H1 (cell line): ENCODE measurements at regions of chr1 and their contacts with region 1.

Region 1: GRCh38 chr1:39973503-39974135 is 18.7 kb downstream of the MFSD2A start:
- DNase-seq: peak; percentile 38 to 85
- H3K4me3 ChIP-seq: no peak overlapping the region
- H3K27ac ChIP-seq: no peak overlapping the region
- H3K4me1 ChIP-seq: peaks cover 0 to 3% (median 0%) of the 10 kb centered on the region in 4 experiments; a peak in 2 of 7 replicates
- H3K27me3 ChIP-seq: no peaks in the 10 kb centered on the region
- CTCF ChIP-seq: peak; percentile 89 to 98 (median 96)
- EP300 ChIP-seq: no peak
- POLR2A ChIP-seq: no peak
- RAD21 ChIP-seq: peak; percentile 98 to 99

Region 2: DNA sequence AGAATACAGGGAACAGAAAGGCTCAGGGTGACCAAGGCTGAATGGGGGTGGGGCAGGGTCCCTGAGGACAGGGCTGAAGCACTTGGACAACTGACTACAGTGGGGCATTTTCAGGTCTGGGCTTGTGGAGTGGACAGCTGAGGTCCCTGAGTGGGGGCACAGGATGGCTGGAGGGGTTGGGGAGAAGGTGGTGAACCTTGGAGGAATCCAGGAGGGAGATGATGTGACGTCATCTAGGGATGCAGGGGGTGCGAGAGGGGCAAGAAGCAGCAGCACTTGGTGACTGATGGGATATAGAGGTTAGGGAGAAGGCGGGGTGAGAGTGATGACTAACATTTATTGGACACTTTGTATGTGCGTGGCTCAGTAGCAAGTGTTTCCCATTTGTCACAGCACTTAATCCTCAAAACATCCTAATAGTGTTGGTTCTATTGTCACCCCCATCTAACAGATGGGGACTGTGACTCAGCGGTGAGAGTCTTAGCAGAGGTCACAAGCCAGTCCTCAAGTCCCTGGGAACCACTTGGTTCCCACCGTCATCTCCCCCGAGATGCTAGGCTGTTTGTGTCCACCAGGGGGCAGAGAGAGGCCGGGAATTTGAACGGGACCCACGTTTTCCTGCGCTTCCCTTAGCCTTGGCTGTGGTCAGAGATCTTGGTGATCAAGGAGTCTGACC is 157.1 kb before region 1 on chr1:
- CTCF ChIA-PET with region 1: interaction called, 72 read pairs
- POLR2A ChIA-PET with region 1: interaction called, 3 read pairs
- DNase-seq: peak; percentile 43 to 92
- H3K4me3 ChIP-seq: no peak overlapping the region
- H3K27ac ChIP-seq: no peak overlapping the region
- H3K4me1 ChIP-seq: no peaks in the 10 kb centered on the region
- H3K27me3 ChIP-seq: no peaks in the 10 kb centered on the region; a peak in 1 of 7 replicates
- CTCF ChIP-seq: peak; percentile 81 to 85 (median 82)
- EP300 ChIP-seq: no peak
- POLR2A ChIP-seq: no peak
- RAD21 ChIP-seq: peak; percentile 86 to 89

Region 3: GRCh38 chr1:39901698-39902459 is 71.7 kb before region 1 on chr1 and contains the start of gene MYCL:
- CTCF ChIA-PET with region 1: interaction called, 32 read pairs
- POLR2A ChIA-PET with region 1: interaction called, 9 read pairs
- DNase-seq: peak; percentile 79 to 94
- H3K4me3 ChIP-seq: peak within 1 kb of the TSS; percentile 81 to 89 (median 84)
- H3K27ac ChIP-seq: no peak within 1 kb of the TSS
- H3K4me1 ChIP-seq: peaks cover 13 to 29% (median 17%) of the 10 kb centered on the region in 4 experiments; a peak in 6 of 7 replicates
- H3K27me3 ChIP-seq: peaks cover 3 to 12% (median 10%) of the 10 kb centered on the region in 4 experiments; a peak in 6 of 7 replicates
- CTCF ChIP-seq: peak; percentile 76 to 86 (median 76)
- EP300 ChIP-seq: peak; percentile 1 to 63; a peak in 1 of 3 replicates
- POLR2A ChIP-seq: peak in 1 of 2 experiments; percentile 18; a peak in 1 of 3 replicates
- RAD21 ChIP-seq: peak; percentile 57 to 77
- total RNA-seq, gene MYCL: 28.8 and 29.9 TPM in 2 replicates

Region 4: GRCh38 chr1:39954816-39955546 is 18.6 kb before region 1 on chr1 and contains the start of gene MFSD2A:
- CTCF ChIA-PET with region 1: interaction called, 64 read pairs
- POLR2A ChIA-PET with region 1: interaction called, 11 read pairs
- DNase-seq: peak; percentile 69 to 95
- H3K4me3 ChIP-seq: peak within 1 kb of the TSS; percentile 50 to 78 (median 69)
- H3K27ac ChIP-seq: no peak within 1 kb of the TSS
- H3K4me1 ChIP-seq: peaks cover under 1 to 9% (median 7%) of the 10 kb centered on the region in 4 experiments
- H3K27me3 ChIP-seq: peaks cover 0 to 16% (median 12%) of the 10 kb centered on the region in 4 experiments; a peak in 5 of 7 replicates
- CTCF ChIP-seq: no peak
- EP300 ChIP-seq: no peak
- POLR2A ChIP-seq: peak; percentile 84 to 89
- RAD21 ChIP-seq: no peak
- total RNA-seq, gene MFSD2A: 25.9 and 26.6 TPM in 2 replicates

Region 5: GRCh38 chr1:40032240-40032891 is 58.7 kb after region 1 on chr1:
- CTCF ChIA-PET with region 1: interaction called, 48 read pairs
- POLR2A ChIA-PET with region 1: no interaction called
- DNase-seq: no peak
- H3K4me3 ChIP-seq: no peak overlapping the region
- H3K27ac ChIP-seq: no peak overlapping the region
- H3K4me1 ChIP-seq: no peaks in the 10 kb centered on the region
- H3K27me3 ChIP-seq: no peaks in the 10 kb centered on the region
- CTCF ChIP-seq: peak in 2 of 3 experiments; percentile 67 to 73; a peak in 3 of 4 replicates
- EP300 ChIP-seq: no peak
- POLR2A ChIP-seq: no peak
- RAD21 ChIP-seq: peak; percentile 71 to 76